ENCODE measurements at regions of chr18 and their contacts with region 1.

Region 1: GRCh38 chr18:20971886-20972267 is 139.7 kb downstream of the ROCK1 start:
- DNase-seq: no peak
- ATAC-seq: peak; percentile 76 to 80 (median 79)
- H3K4me3 ChIP-seq: no peak overlapping the region
- H3K27ac ChIP-seq: no peak overlapping the region
- H3K4me1 ChIP-seq: no peaks in the 10 kb centered on the region
- H3K27me3 ChIP-seq: no peaks in the 10 kb centered on the region
- CTCF ChIP-seq: peak; percentile 40 to 47 (median 44)
- POLR2A ChIP-seq: no peak

Region 2: GRCh38 chr18:21111341-21112139 is 139.7 kb after region 1 on chr18 and contains the start of gene ROCK1:
- intact Hi-C with region 1: loop called in 1 of 2 experiments (anchors 10 kb)
- DNase-seq: peak; percentile 99 to 100 (median 99)
- ATAC-seq: peak; percentile 93 to 98 (median 94)
- H3K4me3 ChIP-seq: peak within 1 kb of the TSS; percentile 88 to 94 (median 94)
- H3K27ac ChIP-seq: peak within 1 kb of the TSS; percentile 84 to 98 (median 96)
- H3K4me1 ChIP-seq: peaks cover 0 to 31% (median 8%) of the 10 kb centered on the region in 4 donors
- H3K27me3 ChIP-seq: no peaks in the 10 kb centered on the region
- CTCF ChIP-seq: no peak
- POLR2A ChIP-seq: peak; percentile 69
- total RNA-seq, gene ROCK1: 17.1 to 23.2 (median 21.6) TPM

Region 3: DNA sequence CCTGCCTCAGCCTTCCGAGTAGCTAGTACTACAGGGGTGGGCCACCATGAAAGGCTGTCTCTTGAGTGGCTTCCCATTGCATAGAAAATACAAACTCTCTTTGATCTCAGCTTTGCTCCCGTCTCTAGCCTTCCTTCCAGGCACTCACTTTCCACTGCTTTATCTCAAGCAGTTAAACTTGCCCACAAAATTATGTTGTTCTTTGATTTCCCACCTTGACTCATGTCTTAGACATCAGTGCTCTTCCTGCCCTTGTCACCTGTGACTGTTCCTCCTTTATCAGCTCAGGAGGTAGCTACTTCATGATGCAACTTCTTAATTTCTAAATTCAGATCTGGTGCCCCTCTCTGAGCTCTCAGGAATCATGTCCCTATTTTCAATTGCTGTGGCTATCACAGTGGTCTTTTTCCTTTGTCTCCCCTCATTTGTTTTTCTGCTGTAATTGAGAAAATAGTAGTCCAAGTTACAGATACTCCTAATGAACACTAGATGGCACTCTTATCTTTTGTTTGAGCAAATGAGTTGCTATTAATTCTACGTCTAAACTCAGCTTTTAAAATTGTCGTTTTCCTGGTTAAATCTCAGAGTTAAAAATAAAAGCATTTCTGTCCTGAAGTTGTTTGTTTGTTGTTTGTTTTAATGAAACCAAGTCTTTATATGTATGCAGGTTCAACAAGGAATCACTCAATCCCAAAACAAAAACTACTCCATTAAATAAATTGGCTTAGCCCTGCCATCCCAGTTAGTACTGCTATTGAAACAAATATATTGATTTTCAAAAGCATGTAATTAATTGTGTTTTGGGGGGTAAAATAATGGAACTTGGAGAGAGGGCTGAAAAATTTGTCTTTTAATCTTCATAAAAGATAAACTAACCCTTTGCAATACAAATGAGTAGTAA is 223.2 kb after region 1 on chr18:
- intact Hi-C with region 1: no loop called
- DNase-seq: no peak
- ATAC-seq: peak; percentile 64 to 81 (median 74)
- H3K4me3 ChIP-seq: no peak overlapping the region
- H3K27ac ChIP-seq: no peak overlapping the region
- H3K4me1 ChIP-seq: no peaks in the 10 kb centered on the region
- H3K27me3 ChIP-seq: no peaks in the 10 kb centered on the region
- CTCF ChIP-seq: peak; percentile 60 to 80 (median 68)
- POLR2A ChIP-seq: no peak

Region 4: DNA sequence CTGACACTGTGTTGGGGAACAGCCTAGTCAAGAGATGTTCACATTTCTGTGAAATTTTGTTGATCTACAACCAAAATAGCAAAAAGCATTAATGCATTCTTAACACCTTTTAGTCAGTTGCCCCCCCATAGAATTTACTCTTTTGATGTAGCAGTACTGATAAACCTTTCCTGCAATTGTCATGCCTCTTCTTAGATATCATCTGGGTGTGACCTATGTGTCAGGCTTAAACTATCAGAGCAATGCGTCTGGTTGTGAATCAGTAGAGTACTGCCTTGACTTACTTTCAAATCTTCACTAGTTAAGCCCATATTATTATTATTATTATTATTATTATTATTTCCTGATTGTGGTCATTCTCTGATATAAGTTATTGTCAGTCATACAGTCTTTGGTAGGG is 332.0 kb after region 1 on chr18:
- intact Hi-C with region 1: no loop called
- DNase-seq: no peak
- ATAC-seq: no peak
- H3K4me3 ChIP-seq: no peak overlapping the region
- H3K27ac ChIP-seq: no peak overlapping the region
- H3K4me1 ChIP-seq: no peaks in the 10 kb centered on the region
- H3K27me3 ChIP-seq: no peaks in the 10 kb centered on the region
- CTCF ChIP-seq: no peak
- POLR2A ChIP-seq: no peak